CD8-positive, alpha-beta memory T cell (primary cell): ENCODE measurements at regions of chr6 and their contacts with region 1.

Region 1: GRCh38 chr6:137866914-137867684 is at the start of gene TNFAIP3:
- DNase-seq: peak; percentile 92 to 97 (median 95)
- H3K4me3 ChIP-seq: peak within 1 kb of the TSS; percentile 98
- H3K4me3 Mint-ChIP-seq: peak within 1 kb of the TSS; percentile 93 to 99 (median 94)
- H3K27ac ChIP-seq: peak within 1 kb of the TSS; percentile 97
- H3K27ac Mint-ChIP-seq: peak within 1 kb of the TSS; percentile 86 to 99 (median 98)
- H3K4me1 ChIP-seq: peaks cover 46% of the 10 kb centered on the region
- H3K4me1 Mint-ChIP-seq: peaks cover 37 to 60% (median 51%) of the 10 kb centered on the region in 3 donors
- H3K27me3 ChIP-seq: no peaks in the 10 kb centered on the region
- H3K27me3 Mint-ChIP-seq: peaks cover 0 to 7% of the 10 kb centered on the region in 2 donors
- total RNA-seq, gene TNFAIP3: 267 to 298 TPM

Region 2: DNA sequence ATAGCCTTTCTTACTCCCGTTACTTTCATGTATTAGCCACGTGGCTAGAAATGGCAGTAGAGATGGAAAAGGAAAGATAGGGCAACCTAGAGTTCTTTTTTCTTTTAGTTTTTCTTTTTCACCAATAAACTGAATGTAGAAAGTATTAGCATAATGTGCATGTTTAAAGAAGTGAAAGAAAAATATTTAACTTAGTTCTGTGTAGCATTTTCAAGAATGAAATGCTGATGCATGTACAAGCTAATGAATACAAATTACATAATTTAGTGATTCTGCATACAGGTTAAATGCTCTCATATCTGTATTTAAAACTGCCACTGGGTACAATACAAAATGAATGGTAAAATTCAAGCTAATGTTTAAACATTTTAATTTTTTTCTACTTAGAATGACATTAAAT is 799.7 kb before region 1 on chr6:
- CTCF ChIA-PET with region 1: no interaction called
- POLR2A ChIA-PET with region 1: no interaction called
- DNase-seq: no peak
- H3K4me3 ChIP-seq: no peak overlapping the region
- H3K4me3 Mint-ChIP-seq: no peak overlapping the region
- H3K27ac ChIP-seq: no peak overlapping the region
- H3K27ac Mint-ChIP-seq: no peak overlapping the region
- H3K4me1 ChIP-seq: no peaks in the 10 kb centered on the region
- H3K4me1 Mint-ChIP-seq: peaks cover 10 to 14% (median 12%) of the 10 kb centered on the region in 3 donors
- H3K27me3 ChIP-seq: no peaks in the 10 kb centered on the region
- H3K27me3 Mint-ChIP-seq: peaks cover 32 to 42% of the 10 kb centered on the region in 2 donors

Region 3: DNA sequence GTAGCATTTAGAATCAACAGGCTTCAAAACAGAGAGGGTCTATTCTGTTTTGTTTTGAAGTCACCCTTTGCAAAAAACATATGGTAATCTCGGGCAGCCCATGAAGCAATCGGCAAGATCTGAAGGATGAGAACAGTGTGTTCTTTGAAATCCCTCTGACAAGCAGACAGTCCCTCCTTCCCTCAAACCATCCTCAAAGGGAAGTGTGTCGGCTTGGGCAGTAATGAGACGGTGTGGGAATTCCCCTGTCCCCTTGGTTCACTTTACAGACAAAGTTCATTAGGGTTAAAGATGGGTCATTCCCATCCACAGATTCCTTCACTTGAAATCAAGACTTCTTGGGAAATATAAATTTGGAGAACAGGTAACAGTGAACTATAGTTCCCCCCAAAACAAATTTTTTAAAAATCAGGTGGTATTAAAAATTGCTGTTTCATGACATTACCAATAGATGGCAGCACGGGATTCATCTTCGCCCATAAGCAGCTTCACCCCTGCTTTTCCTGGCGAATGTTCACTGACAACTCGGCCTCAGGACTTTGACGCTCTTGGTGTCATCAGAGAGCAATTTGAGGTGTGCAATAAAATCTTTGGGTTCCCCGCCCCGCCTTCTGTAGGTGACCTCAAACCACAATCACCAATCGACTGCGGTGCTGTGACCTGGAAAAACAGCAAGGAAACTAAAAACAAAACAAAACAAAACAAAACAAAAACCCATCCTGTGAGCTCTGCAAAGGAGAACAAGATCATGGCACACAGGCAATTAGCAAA is 159.3 kb before region 1 on chr6:
- CTCF ChIA-PET with region 1: interaction called, 85 read pairs
- POLR2A ChIA-PET with region 1: interaction called, 22 read pairs
- DNase-seq: peak; percentile 74 to 96 (median 92)
- H3K4me3 ChIP-seq: peak overlapping the region; percentile 20
- H3K4me3 Mint-ChIP-seq: peak overlapping the region; percentile 38 to 78 (median 75)
- H3K27ac ChIP-seq: peak overlapping the region; percentile 72
- H3K27ac Mint-ChIP-seq: peak overlapping the region; percentile 90 to 99 (median 97)
- H3K4me1 ChIP-seq: peaks cover 47% of the 10 kb centered on the region
- H3K4me1 Mint-ChIP-seq: peaks cover 50 to 75% (median 72%) of the 10 kb centered on the region in 3 donors
- H3K27me3 ChIP-seq: no peaks in the 10 kb centered on the region
- H3K27me3 Mint-ChIP-seq: peaks cover 0 to 7% of the 10 kb centered on the region in 2 donors

Region 4: GRCh38 chr6:137799950-137800568 is 67.0 kb before region 1 on chr6:
- CTCF ChIA-PET with region 1: interaction called, 64 read pairs
- POLR2A ChIA-PET with region 1: interaction called, 25 read pairs
- DNase-seq: peak; percentile 44 to 82 (median 73)
- H3K4me3 ChIP-seq: no peak overlapping the region
- H3K4me3 Mint-ChIP-seq: peak overlapping the region in 1 of 7 donors; percentile 30
- H3K27ac ChIP-seq: no peak overlapping the region
- H3K27ac Mint-ChIP-seq: peak overlapping the region in 7 of 8 donors; percentile 21 to 91 (median 82)
- H3K4me1 ChIP-seq: peaks cover 38% of the 10 kb centered on the region
- H3K4me1 Mint-ChIP-seq: peaks cover 32 to 57% (median 39%) of the 10 kb centered on the region in 3 donors
- H3K27me3 ChIP-seq: no peaks in the 10 kb centered on the region
- H3K27me3 Mint-ChIP-seq: no peaks in the 10 kb centered on the region

Region 5: DNA sequence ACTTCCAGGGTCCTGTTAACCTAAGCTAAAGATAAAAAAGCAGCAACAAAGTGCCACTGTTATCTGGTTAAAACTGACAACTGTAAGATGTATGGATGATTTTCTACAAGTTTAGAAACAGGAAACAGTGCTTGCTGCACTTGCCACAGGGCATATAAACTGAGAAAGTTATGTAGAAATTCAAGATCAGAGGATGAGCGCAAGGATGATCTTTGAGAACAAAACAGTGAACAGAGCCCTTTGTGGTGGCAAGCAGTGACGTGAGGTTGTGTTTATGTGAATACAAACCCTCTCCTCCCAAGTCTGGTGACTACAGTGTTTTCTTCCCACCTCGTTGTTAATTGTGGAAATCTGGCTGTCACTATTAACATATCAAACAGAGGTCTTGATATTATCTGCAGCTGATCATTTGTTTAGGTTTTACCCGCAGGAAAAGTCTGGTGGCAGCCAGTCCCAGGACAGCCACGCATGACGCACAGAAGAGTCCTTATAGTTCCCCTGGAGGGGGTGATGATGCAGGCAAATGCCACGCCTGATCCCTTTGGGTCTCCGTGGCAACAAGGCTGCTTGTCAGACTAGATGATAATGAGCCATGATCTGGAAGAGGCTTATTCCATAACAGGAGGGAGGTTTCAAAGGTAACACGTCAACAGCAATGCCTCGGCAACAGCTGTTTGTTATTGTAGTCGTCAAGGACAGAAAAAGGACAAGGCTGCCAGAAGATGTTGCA is 43.1 kb before region 1 on chr6:
- CTCF ChIA-PET with region 1: interaction called, 14 read pairs
- POLR2A ChIA-PET with region 1: interaction called, 13 read pairs
- DNase-seq: peak; percentile 80 to 97 (median 96)
- H3K4me3 ChIP-seq: peak overlapping the region; percentile 41
- H3K4me3 Mint-ChIP-seq: peak overlapping the region; percentile 20 to 82 (median 76)
- H3K27ac ChIP-seq: peak overlapping the region; percentile 97
- H3K27ac Mint-ChIP-seq: peak overlapping the region; percentile 91 to 100 (median 99)
- H3K4me1 ChIP-seq: peaks cover 79% of the 10 kb centered on the region
- H3K4me1 Mint-ChIP-seq: peaks cover 49 to 85% (median 78%) of the 10 kb centered on the region in 3 donors
- H3K27me3 ChIP-seq: no peaks in the 10 kb centered on the region
- H3K27me3 Mint-ChIP-seq: peaks cover 0 to 3% of the 10 kb centered on the region in 2 donors

Region 6: DNA sequence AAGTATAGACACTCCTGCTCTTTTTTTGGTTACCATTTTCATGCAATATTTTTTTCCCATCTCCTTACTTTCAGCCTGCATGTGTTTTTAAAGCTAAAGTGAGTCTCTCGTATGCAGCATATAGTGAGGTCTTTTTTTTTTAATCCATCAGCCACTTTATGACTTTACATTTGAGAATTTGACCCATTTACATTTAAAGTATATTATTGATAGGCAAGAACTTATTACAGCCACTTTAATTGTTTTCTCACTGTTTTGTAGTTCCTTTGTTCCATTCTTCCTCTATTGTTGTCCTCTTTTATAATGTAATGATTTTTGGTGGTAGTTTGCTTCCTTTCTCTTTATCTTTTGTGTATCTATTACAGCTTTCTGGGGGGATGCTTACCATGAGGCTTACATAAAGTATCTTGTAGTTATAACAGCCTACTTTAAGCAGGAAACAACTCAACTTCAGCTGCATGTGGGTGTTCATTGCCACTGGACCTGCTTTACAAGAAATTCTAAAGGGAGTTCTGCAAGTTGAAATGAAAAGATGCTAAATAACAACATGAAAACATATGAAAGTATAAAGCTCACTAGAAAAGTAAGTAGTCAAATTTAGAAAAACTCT is 71.8 kb after region 1 on chr6:
- CTCF ChIA-PET with region 1: interaction called, 24 read pairs
- POLR2A ChIA-PET with region 1: interaction called, 3 read pairs
- DNase-seq: no peak
- H3K4me3 ChIP-seq: no peak overlapping the region
- H3K4me3 Mint-ChIP-seq: no peak overlapping the region
- H3K27ac ChIP-seq: no peak overlapping the region
- H3K27ac Mint-ChIP-seq: peak overlapping the region in 1 of 8 donors; percentile 50
- H3K4me1 ChIP-seq: peaks cover 7% of the 10 kb centered on the region
- H3K4me1 Mint-ChIP-seq: peaks cover 11 to 15% (median 12%) of the 10 kb centered on the region in 3 donors
- H3K27me3 ChIP-seq: no peaks in the 10 kb centered on the region
- H3K27me3 Mint-ChIP-seq: peaks cover 0 to 4% of the 10 kb centered on the region in 2 donors

Region 7: DNA sequence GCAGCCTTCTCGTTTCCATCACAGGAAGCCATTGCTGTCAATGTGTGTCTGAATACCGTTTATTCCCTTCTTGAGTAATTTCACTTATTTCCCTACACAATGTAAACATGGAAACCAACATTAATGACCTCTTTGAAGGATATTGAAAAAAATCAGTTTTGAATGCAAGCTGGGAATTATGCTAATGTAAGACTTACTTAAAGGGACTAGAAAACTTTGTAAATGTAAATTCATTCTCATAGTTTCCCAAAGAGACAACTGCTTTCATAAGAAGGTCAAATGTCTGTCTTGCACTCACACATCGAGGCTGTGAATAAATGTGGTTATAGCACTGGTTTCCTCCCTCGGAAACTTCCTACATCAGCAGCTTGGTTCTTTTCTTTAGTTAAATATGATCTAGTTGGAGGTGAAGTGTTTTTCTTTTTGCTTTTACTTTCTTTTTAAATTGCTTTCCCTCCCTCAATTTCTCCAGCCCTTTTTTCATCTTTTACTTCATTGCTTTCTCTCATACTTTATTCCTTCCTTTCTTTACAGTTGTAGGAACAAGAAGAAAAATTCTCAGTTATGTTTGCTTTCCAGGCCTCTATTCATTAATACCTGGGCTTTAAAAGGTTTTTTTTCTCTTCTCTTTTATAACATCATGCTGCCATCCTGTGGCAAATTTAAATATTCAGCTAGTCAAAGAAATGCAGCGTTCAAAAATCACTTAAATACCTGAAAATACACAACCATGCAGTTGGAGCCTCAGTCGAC is 108.3 kb after region 1 on chr6:
- CTCF ChIA-PET with region 1: interaction called, 17 read pairs
- POLR2A ChIA-PET with region 1: interaction called, 6 read pairs
- DNase-seq: peak in 4 of 5 donors; percentile 31 to 77 (median 54)
- H3K4me3 ChIP-seq: peak overlapping the region; percentile 33
- H3K4me3 Mint-ChIP-seq: peak overlapping the region; percentile 69 to 88 (median 81)
- H3K27ac ChIP-seq: peak overlapping the region; percentile 21
- H3K27ac Mint-ChIP-seq: peak overlapping the region; percentile 81 to 99 (median 97)
- H3K4me1 ChIP-seq: peaks cover 24% of the 10 kb centered on the region
- H3K4me1 Mint-ChIP-seq: peaks cover 65 to 75% (median 73%) of the 10 kb centered on the region in 3 donors
- H3K27me3 ChIP-seq: no peaks in the 10 kb centered on the region
- H3K27me3 Mint-ChIP-seq: no peaks in the 10 kb centered on the region

Region 8: DNA sequence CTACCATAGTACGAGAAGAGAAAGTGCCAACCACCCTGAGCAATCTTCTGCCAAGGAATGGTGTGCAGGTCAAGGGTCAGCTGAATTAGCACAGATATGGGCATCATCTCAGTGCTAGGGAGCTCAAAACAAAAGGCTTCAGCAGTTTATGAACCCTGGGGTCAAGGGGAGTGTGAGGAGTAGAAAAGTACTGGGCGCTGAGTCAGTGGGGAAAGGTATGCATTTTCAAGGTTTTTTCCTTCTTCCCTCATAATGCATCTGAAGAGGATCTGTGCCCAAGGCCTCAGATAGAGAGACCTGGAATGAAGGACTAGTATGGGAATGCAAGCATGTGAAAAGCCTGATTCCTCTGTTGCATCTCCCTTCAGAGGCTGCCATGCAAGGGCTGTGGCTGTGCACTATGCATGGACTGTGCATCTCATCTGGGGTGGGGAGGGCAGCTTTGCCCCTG is 158.5 kb after region 1 on chr6:
- CTCF ChIA-PET with region 1: no interaction called
- POLR2A ChIA-PET with region 1: no interaction called
- DNase-seq: no peak
- H3K4me3 ChIP-seq: no peak overlapping the region
- H3K4me3 Mint-ChIP-seq: no peak overlapping the region
- H3K27ac ChIP-seq: no peak overlapping the region
- H3K27ac Mint-ChIP-seq: no peak overlapping the region
- H3K4me1 ChIP-seq: no peaks in the 10 kb centered on the region
- H3K4me1 Mint-ChIP-seq: no peaks in the 10 kb centered on the region
- H3K27me3 ChIP-seq: no peaks in the 10 kb centered on the region
- H3K27me3 Mint-ChIP-seq: peaks cover 5 to 17% of the 10 kb centered on the region in 2 donors

Region 9: GRCh38 chr6:138572167-138572865 is 705.2 kb after region 1 on chr6:
- CTCF ChIA-PET with region 1: no interaction called
- POLR2A ChIA-PET with region 1: no interaction called
- DNase-seq: no peak
- H3K4me3 ChIP-seq: no peak overlapping the region
- H3K4me3 Mint-ChIP-seq: peak overlapping the region in 2 of 7 donors; percentile 15 to 33
- H3K27ac ChIP-seq: no peak overlapping the region
- H3K27ac Mint-ChIP-seq: no peak overlapping the region
- H3K4me1 ChIP-seq: no peaks in the 10 kb centered on the region
- H3K4me1 Mint-ChIP-seq: no peaks in the 10 kb centered on the region
- H3K27me3 ChIP-seq: peaks cover 16% of the 10 kb centered on the region
- H3K27me3 Mint-ChIP-seq: peaks cover 0 to 19% of the 10 kb centered on the region in 2 donors